ENCODE measurements at regions of chr20 and their contacts with region 1.

Region 1: DNA sequence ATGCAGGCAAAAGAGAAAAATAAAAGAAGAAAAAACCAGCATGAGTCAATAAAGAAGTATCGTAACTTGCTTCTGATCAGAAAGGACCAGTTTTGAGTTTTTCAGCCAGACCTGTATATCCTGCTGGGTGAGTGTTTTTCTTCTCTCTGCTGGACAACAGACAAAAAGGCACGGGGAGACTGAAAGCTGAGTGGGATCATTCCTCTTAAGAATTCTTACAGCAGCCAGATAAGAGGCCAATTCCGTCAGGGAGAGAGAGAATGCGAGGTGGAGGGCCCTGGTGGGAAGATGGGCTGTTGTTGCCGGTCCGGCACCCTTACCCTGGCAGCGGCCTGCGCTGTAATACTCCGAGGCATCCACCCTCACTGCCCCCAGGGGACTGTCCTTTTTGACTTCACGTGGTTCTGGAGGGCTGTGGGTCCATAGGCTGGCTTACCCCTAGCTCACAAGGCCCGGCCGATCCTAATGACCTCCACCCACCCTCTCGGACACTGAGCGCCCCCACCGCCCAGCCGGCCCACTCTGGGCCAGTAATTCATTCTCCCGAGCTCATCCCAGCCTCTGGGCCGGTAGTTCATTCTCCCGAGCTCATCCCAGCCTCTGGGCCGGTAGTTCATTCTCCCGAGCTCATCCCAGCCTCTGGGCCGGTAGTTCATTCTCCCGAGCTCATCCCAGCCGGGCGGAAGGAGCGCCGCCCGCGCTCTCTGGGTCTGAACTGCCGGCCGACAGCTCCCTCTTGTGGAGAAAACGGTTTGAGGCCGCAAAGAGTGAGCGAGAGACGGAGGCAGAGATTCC is 118.3 kb upstream of the SIRPA start:
- DNase-seq: peak; percentile 63 to 80 (median 75)
- H3K4me3 ChIP-seq: peak overlapping the region; percentile 69 to 76
- H3K4me3 Mint-ChIP-seq: peak overlapping the region; percentile 72 to 94 (median 86)
- H3K27ac ChIP-seq: peak overlapping the region; percentile 40
- H3K27ac Mint-ChIP-seq: peak overlapping the region in 5 of 7 donors; percentile 15 to 92 (median 55)
- H3K4me1 ChIP-seq: peaks cover 14% of the 10 kb centered on the region
- H3K4me1 Mint-ChIP-seq: peaks cover 12 to 20% (median 15%) of the 10 kb centered on the region in 4 donors
- H3K27me3 ChIP-seq: no peaks in the 10 kb centered on the region
- H3K27me3 Mint-ChIP-seq: peaks cover 7 to 15% of the 10 kb centered on the region in 2 donors

Region 2: DNA sequence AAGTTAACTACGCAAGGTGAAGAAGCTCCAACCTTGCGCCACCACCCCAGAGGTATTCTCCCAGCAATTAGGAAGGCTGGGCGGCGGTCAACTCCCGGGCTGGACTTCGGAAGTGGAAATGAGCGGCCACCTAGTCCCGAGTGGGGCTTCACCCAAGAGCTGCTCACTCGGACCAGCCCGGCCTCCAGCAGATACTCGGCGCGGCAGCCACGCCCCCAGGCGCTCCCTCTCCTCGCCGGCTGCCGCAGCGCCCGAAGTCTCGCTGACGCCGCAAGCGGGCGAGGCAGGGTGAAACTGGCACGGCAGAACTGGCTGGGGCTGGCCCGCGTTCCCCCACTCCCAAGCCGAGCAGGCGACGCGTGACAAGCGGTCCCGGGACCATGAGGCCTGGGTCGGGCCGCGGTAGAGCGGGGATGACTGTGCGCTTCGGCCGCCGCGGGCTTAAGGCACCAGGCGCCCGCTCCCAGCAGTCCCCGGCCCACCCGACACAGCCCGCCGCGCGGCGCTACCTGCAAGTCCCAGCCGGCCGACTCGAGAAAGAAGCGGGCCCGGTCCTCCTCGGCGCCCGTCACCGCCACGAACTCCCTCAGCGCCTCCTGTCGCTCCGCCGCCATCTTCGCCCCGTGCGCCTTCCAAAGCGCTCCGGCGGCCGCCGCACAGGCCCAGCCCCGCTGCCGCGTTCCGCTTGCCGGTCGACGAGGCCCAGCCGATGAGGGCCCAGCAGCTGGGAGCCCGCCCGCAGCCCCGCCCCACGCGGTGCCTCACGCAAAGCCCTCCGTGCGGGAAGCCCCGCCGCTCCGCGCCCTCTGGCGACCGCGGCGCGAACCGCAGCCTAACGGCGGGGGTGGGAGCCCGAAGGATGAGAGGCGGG is 310.4 kb before region 1 on chr20 and contains the start of gene NSFL1C:
- CTCF ChIA-PET with region 1: interaction called, 15 read pairs
- POLR2A ChIA-PET with region 1: no interaction called
- intact Hi-C with region 1: loop called (anchors 2 kb)
- DNase-seq: peak; percentile 95 to 99 (median 97)
- H3K4me3 ChIP-seq: peak within 1 kb of the TSS; percentile 53 to 65
- H3K4me3 Mint-ChIP-seq: peak within 1 kb of the TSS; percentile 78 to 93 (median 88)
- H3K27ac ChIP-seq: peak within 1 kb of the TSS; percentile 89
- H3K27ac Mint-ChIP-seq: peak within 1 kb of the TSS; percentile 66 to 95 (median 91)
- H3K4me1 ChIP-seq: peaks cover 41% of the 10 kb centered on the region
- H3K4me1 Mint-ChIP-seq: peaks cover 34 to 49% (median 40%) of the 10 kb centered on the region in 4 donors
- H3K27me3 ChIP-seq: no peaks in the 10 kb centered on the region
- H3K27me3 Mint-ChIP-seq: peaks cover 1 to 5% of the 10 kb centered on the region in 2 donors
- total RNA-seq, gene NSFL1C: 57.5 to 65.8 TPM

Region 3: GRCh38 chr20:1509237-1509636 is 267.6 kb before region 1 on chr20:
- CTCF ChIA-PET with region 1: interaction called, 45 read pairs
- POLR2A ChIA-PET with region 1: no interaction called
- intact Hi-C with region 1: no loop called
- DNase-seq: peak in 4 of 5 donors; percentile 8 to 28 (median 14)
- H3K4me3 ChIP-seq: no peak overlapping the region
- H3K4me3 Mint-ChIP-seq: no peak overlapping the region
- H3K27ac ChIP-seq: no peak overlapping the region
- H3K27ac Mint-ChIP-seq: no peak overlapping the region
- H3K4me1 ChIP-seq: no peaks in the 10 kb centered on the region
- H3K4me1 Mint-ChIP-seq: peaks cover 0 to 2% (median 0%) of the 10 kb centered on the region in 4 donors
- H3K27me3 ChIP-seq: no peaks in the 10 kb centered on the region
- H3K27me3 Mint-ChIP-seq: peaks cover 14 to 20% of the 10 kb centered on the region in 2 donors

Region 4: DNA sequence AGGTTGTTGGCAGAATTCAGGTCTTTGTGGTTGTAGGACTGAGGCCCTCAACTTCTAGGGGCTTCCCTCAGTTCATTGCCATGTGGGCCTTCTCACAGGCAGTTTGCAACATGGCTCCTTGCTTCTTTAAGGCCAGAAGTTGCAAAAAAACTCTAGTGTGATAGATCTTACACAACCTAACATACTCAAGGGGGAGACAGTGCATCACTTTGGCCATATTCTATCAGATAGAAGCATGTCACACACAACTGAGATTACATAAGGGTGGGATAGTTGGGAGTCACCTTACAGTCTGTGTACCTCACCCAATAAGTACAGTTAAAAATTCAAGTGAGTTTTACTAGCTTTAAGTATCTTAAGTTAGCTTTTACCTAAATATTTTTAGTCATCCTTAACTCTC is 220.9 kb before region 1 on chr20:
- CTCF ChIA-PET with region 1: interaction called, 55 read pairs
- POLR2A ChIA-PET with region 1: no interaction called
- intact Hi-C with region 1: loop called (anchors 1 kb)
- DNase-seq: peak in 4 of 5 donors; percentile 11 to 30 (median 28)
- H3K4me3 ChIP-seq: no peak overlapping the region
- H3K4me3 Mint-ChIP-seq: no peak overlapping the region
- H3K27ac ChIP-seq: no peak overlapping the region
- H3K27ac Mint-ChIP-seq: no peak overlapping the region
- H3K4me1 ChIP-seq: no peaks in the 10 kb centered on the region
- H3K4me1 Mint-ChIP-seq: peaks cover 0 to 9% (median 7%) of the 10 kb centered on the region in 4 donors
- H3K27me3 ChIP-seq: no peaks in the 10 kb centered on the region
- H3K27me3 Mint-ChIP-seq: peaks cover 0 to 3% of the 10 kb centered on the region in 2 donors

Region 5: DNA sequence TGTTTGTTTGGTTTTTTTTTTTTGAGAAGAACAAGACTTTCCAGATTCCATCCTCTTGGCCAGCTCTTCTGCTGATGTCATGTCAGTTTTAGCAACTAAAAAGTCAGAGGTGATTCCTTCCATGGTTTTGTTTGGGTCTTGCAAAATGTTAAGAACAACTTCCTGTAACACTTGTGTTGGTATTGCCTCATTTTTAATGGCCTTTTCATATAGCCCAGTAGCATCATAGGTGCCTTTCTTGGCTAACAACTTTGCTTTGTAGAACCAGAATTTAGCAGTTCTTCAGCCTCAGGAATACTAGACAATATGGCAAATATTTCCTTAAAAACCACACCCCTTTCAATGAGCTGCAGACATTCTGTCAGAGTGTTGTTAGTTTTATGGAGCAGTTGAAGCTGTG is 19.8 kb before region 1 on chr20:
- CTCF ChIA-PET with region 1: interaction called, 27 read pairs
- POLR2A ChIA-PET with region 1: no interaction called
- intact Hi-C with region 1: no loop called
- DNase-seq: no peak
- H3K4me3 ChIP-seq: no peak overlapping the region
- H3K4me3 Mint-ChIP-seq: no peak overlapping the region
- H3K27ac ChIP-seq: no peak overlapping the region
- H3K27ac Mint-ChIP-seq: no peak overlapping the region
- H3K4me1 ChIP-seq: no peaks in the 10 kb centered on the region
- H3K4me1 Mint-ChIP-seq: peaks cover 0 to 9% (median 8%) of the 10 kb centered on the region in 4 donors
- H3K27me3 ChIP-seq: no peaks in the 10 kb centered on the region
- H3K27me3 Mint-ChIP-seq: peaks cover 0 to 3% of the 10 kb centered on the region in 2 donors

Measured in CD4-positive, alpha-beta memory T cell (primary cell).